ENCODE measurements at regions of chr11 and their contacts with region 1.

Region 1: GRCh38 chr11:102346748-102347461 is at the start of gene BIRC2:
- DNase-seq: peak; percentile 95
- H3K4me3 Mint-ChIP-seq: peak within 1 kb of the TSS; percentile 77
- H3K27ac Mint-ChIP-seq: peak within 1 kb of the TSS; percentile 99
- H3K4me1 Mint-ChIP-seq: peaks cover 45% of the 10 kb centered on the region
- H3K27me3 Mint-ChIP-seq: no peaks in the 10 kb centered on the region
- total RNA-seq, gene BIRC2: 26.6 to 26.9 TPM

Region 2: DNA sequence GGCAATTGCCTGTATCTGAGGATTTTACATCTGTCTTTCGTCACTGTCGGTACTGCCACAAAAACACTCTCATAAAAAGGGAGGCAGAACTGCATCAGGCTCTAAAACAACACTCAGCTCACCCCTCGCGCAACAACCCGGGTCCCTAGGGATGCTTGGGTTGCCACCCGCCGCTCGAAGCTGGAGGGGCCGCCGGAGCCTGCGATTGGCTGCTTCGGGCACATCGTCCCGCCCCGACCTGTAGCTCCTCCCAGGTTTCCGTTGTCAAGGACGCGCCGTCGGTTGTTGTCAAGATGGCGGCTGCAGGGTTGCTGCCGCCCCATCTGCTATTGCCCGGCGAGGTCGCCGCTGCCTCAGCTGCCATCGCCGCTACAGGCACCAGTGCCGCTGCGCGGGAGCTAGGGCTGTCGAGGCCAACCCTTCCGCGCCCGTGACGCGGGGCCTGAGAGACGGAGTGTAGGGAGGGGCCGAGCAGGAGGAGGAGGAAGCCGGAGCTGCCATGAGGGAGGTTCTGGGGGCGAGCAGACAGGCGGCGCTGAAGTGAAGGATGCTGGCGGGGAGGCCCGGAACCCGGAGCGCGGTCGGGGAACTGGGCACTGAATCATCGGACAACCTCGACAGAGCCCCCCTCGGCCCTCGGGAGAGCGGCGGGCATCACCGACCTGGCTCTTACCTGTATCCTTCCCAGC is 432.0 kb before region 1 on chr11 and contains the start of gene CEP126:
- CTCF ChIA-PET with region 1: no interaction called
- intact Hi-C with region 1: loop called (anchors 1 kb)
- DNase-seq: peak; percentile 96
- H3K4me3 Mint-ChIP-seq: peak within 1 kb of the TSS; percentile 87
- H3K27ac Mint-ChIP-seq: peak within 1 kb of the TSS; percentile 72
- H3K4me1 Mint-ChIP-seq: peaks cover 19% of the 10 kb centered on the region
- H3K27me3 Mint-ChIP-seq: no peaks in the 10 kb centered on the region
- total RNA-seq, gene CEP126: 1.1 to 1.2 TPM

Region 3: DNA sequence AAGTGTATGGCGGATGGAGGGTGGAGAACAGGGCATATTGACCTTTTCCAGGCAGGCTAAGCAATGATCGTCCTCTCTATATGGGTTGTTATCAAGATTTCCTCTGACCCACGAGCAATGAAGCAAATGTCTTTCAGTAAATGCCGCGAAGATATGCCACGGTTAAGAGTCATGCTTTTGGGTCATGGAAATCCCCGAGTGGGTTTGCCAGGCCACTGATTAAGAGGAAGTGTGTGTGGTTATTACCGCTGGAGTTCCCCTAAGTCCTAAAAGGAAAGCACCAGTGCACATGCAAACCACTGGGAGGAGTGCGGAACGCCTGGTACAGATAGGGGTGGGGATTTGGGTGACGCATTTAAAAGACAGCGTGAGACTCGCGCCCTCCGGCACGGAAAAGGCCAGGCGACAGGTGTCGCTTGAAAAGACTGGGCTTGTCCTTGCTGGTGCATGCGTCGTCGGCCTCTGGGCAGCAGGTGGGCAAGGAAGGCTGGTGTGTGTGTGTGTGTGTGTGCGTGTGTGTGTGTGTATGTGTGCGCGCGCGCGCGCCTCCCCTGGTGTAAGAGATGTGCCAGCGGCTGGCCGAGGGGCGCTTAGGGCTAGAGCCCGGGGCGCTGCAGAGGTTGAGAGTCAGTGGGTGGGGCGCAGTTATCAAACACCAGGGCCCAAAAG is 29.7 kb before region 1 on chr11 and contains the start of gene BIRC3:
- CTCF ChIA-PET with region 1: interaction called, 7 read pairs
- intact Hi-C with region 1: loop called (anchors 1 kb)
- DNase-seq: peak; percentile 97
- H3K4me3 Mint-ChIP-seq: peak within 1 kb of the TSS; percentile 96
- H3K27ac Mint-ChIP-seq: peak within 1 kb of the TSS; percentile 98
- H3K4me1 Mint-ChIP-seq: peaks cover 66% of the 10 kb centered on the region
- H3K27me3 Mint-ChIP-seq: no peaks in the 10 kb centered on the region
- total RNA-seq, gene BIRC3: 100 to 105 TPM

Region 4: GRCh38 chr11:102396708-102397563 is 50.0 kb after region 1 on chr11:
- CTCF ChIA-PET with region 1: interaction called, 13 read pairs
- intact Hi-C with region 1: loop called (anchors 1 kb)
- DNase-seq: no peak
- H3K4me3 Mint-ChIP-seq: no peak overlapping the region
- H3K27ac Mint-ChIP-seq: peak overlapping the region; percentile 63
- H3K4me1 Mint-ChIP-seq: peaks cover 48% of the 10 kb centered on the region
- H3K27me3 Mint-ChIP-seq: no peaks in the 10 kb centered on the region

Region 5: GRCh38 chr11:102451681-102452460 is 105.0 kb after region 1 on chr11:
- CTCF ChIA-PET with region 1: interaction called, 8 read pairs
- intact Hi-C with region 1: loop called (anchors 1 kb)
- DNase-seq: peak; percentile 81
- H3K4me3 Mint-ChIP-seq: peak overlapping the region; percentile 89
- H3K27ac Mint-ChIP-seq: peak overlapping the region; percentile 96
- H3K4me1 Mint-ChIP-seq: peaks cover 70% of the 10 kb centered on the region
- H3K27me3 Mint-ChIP-seq: no peaks in the 10 kb centered on the region

Region 6: DNA sequence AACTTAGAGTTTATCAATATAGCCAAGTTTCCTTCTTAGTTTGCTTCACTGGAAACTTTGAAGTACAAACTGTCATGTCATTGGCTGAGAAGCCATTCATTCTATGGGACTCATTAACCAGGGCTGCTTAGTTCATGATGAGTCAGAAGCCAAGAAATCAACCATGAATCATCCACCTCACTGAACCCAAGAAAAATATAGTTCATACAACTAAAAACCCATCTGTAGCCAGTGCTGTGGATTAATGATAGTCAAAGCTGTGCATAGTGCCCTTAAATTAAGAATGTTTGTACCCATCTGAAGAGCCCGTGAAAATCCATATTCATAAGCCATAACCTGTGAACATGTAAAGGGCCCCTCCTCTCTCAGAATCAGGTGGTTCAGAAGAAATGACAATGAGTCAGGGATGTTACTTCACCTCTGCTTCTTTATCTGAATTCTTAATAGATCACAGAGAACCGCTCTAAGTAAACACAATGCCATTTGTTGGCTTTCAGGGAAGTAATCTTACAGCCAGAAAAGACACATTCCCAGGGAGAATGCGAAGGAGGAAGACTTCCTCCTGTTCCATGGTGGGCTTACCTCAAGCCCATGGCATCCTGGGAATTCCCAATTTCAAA is 252.8 kb after region 1 on chr11:
- CTCF ChIA-PET with region 1: no interaction called
- intact Hi-C with region 1: loop called (anchors 1 kb)
- DNase-seq: peak; percentile 43
- H3K4me3 Mint-ChIP-seq: no peak overlapping the region
- H3K27ac Mint-ChIP-seq: peak overlapping the region; percentile 75
- H3K4me1 Mint-ChIP-seq: peaks cover 27% of the 10 kb centered on the region
- H3K27me3 Mint-ChIP-seq: no peaks in the 10 kb centered on the region

Region 7: GRCh38 chr11:102849319-102849718 is 502.4 kb after region 1 on chr11:
- CTCF ChIA-PET with region 1: no interaction called
- intact Hi-C with region 1: no loop called
- DNase-seq: no peak
- H3K4me3 Mint-ChIP-seq: no peak overlapping the region
- H3K27ac Mint-ChIP-seq: no peak overlapping the region
- H3K4me1 Mint-ChIP-seq: no peaks in the 10 kb centered on the region
- H3K27me3 Mint-ChIP-seq: peaks cover 4% of the 10 kb centered on the region

Measured in activated naive CD4-positive, alpha-beta T cell treated with anti-CD3 and anti-CD28 coated beads for 36 hours (primary cell).